Activated CD4-positive, alpha-beta T cell treated with anti-CD3 and anti-CD28 coated beads, Interleukin-2, amount 10 ng/mL, durations not matched to agents 24 days and 14 days (primary cell): ENCODE measurements at regions of chr9 and their contacts with region 1.

Region 1: GRCh38 chr9:95494416-95495371 is 22.1 kb downstream of the PTCH1 start:
- DNase-seq: peak; percentile 96
- H3K4me3 Mint-ChIP-seq: peak overlapping the region; percentile 77
- H3K27ac Mint-ChIP-seq: peak overlapping the region; percentile 83
- H3K4me1 Mint-ChIP-seq: peaks cover 32% of the 10 kb centered on the region
- H3K27me3 Mint-ChIP-seq: peaks cover 21% of the 10 kb centered on the region

Region 2: GRCh38 chr9:95462249-95463147 is 32.2 kb before region 1 on chr9:
- intact Hi-C with region 1: loop called (anchors 1 kb)
- DNase-seq: peak; percentile 94
- H3K4me3 Mint-ChIP-seq: peak overlapping the region; percentile 78
- H3K27ac Mint-ChIP-seq: peak overlapping the region; percentile 70
- H3K4me1 Mint-ChIP-seq: peaks cover 23% of the 10 kb centered on the region
- H3K27me3 Mint-ChIP-seq: peaks cover 66% of the 10 kb centered on the region